ENCODE measurements at regions of chr16 and their contacts with region 1.

Region 1: DNA sequence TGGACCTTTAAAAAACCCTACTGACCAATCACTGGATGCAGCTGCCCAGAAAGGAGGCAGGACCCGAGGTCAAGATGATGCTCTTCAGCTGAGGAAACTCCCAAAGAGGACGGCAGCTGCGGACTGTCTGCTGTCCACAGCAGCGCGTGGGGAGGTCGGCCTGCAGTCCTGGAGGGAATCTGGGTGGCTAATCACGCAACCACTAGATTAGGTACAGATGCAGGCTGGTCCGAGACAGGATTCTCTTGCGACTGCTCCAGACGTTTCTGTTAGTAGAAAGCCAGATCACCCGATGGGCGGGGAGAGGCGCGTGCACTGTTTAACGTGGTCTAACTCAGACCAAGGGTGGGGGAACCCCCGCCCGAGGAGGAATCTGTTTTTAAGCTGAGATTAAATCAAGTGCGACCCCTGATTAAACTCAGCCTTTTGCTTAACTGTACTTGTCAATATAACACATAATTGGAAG is 8.8 kb downstream of the CTRB2 start:
- DNase-seq: no peak
- ATAC-seq: no peak
- H3K4me3 Mint-ChIP-seq: no peak overlapping the region
- H3K27ac Mint-ChIP-seq: no peak overlapping the region
- H3K4me1 Mint-ChIP-seq: peaks cover 12% of the 10 kb centered on the region
- H3K27me3 Mint-ChIP-seq: peaks cover 24% of the 10 kb centered on the region

Region 2: DNA sequence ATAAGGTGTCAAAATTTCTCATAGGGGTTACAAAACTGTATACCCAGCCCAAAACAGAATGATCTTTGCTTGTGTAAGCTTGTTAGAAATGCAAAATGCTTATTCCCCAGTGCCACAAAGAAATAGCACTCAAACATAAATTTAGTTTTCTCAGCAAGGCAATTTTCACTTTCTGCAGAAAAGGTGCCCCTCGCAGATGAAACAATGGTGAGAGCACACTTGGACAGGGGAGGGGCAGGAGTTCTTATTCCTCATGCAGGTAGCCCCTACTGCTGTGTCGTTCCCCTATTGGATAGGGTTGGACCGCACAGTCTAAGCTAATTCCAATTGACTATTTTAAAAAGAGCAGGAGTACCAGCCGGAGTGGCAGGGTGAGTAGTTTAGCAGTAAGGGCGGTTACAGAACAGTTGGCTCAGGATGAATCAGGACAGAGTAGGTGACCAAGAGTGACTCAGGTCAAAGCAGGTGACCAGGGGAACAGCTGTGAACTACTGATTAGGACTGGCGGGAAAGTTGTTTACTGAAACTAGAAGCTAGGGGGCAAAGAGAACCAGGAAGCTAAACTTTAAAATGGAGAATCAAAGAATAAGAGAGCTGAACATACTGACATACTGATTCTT is 76.1 kb before region 1 on chr16:
- CTCF ChIA-PET with region 1: no interaction called
- DNase-seq: no peak
- ATAC-seq: no peak
- H3K4me3 Mint-ChIP-seq: no peak overlapping the region
- H3K27ac Mint-ChIP-seq: no peak overlapping the region
- H3K4me1 Mint-ChIP-seq: no peaks in the 10 kb centered on the region
- H3K27me3 Mint-ChIP-seq: peaks cover 2% of the 10 kb centered on the region

Region 3: GRCh38 chr16:75181630-75182029 is 16.5 kb before region 1 on chr16:
- CTCF ChIA-PET with region 1: interaction called, 13 read pairs
- DNase-seq: no peak
- ATAC-seq: no peak
- H3K4me3 Mint-ChIP-seq: no peak overlapping the region
- H3K27ac Mint-ChIP-seq: no peak overlapping the region
- H3K4me1 Mint-ChIP-seq: peaks cover 3% of the 10 kb centered on the region
- H3K27me3 Mint-ChIP-seq: peaks cover 12% of the 10 kb centered on the region

Region 4: DNA sequence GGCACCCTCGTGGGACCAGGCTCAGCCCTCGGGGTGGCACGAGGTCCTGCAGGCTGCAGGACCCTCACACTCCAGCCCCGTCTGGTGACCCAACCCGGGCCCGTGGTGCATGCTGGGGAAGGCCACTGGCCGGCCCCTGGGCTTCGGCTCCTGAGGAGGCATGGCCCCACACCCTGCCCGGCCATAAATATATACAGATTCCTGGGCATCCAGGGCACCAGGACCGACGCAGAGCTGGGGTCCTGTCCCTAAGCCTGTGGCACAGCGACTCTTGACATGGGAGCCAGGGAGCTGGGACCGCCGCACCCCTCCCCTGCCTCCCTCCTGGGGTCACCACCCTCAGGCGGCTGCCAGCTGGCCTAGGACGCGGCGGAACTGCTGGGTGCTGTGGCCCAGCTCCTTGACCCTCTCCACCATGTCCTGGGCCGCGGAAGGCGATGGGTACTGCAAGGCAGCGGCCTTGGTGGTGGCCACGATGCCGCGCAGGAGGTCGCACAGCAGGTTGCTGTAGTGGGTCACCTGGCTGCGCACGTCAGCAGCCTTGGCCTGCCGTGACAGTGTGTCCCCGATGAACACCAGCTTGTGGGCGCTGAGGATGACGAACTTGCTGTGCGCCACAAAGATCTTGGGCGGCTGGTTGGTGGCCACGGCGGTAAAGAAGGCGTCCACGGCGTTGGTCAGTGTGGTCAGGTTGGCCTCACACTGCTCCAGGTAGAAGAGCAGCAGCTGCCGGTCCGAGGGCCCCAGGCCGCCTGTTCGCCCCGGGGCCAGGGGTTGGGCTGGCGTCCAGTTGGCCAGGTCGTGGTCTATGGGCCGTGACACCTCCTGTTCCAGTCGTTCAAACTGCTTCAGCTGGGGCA is 31.2 kb after region 1 on chr16:
- CTCF ChIA-PET with region 1: interaction called, 39 read pairs
- DNase-seq: no peak
- ATAC-seq: no peak
- H3K4me3 Mint-ChIP-seq: no peak overlapping the region
- H3K27ac Mint-ChIP-seq: no peak overlapping the region
- H3K4me1 Mint-ChIP-seq: peaks cover 2% of the 10 kb centered on the region
- H3K27me3 Mint-ChIP-seq: peaks cover 5% of the 10 kb centered on the region

Region 5: GRCh38 chr16:75379911-75380847 is 182.0 kb after region 1 on chr16:
- CTCF ChIA-PET with region 1: interaction called, 23 read pairs
- DNase-seq: peak; percentile 67
- ATAC-seq: peak; percentile 60
- H3K4me3 Mint-ChIP-seq: peak overlapping the region; percentile 8
- H3K27ac Mint-ChIP-seq: peak overlapping the region; percentile 7
- H3K4me1 Mint-ChIP-seq: peaks cover 24% of the 10 kb centered on the region
- H3K27me3 Mint-ChIP-seq: peaks cover 43% of the 10 kb centered on the region

Region 6: GRCh38 chr16:75402821-75403475 is 204.8 kb after region 1 on chr16:
- CTCF ChIA-PET with region 1: interaction called, 30 read pairs
- DNase-seq: no peak
- ATAC-seq: peak; percentile 64
- H3K4me3 Mint-ChIP-seq: no peak overlapping the region
- H3K27ac Mint-ChIP-seq: no peak overlapping the region
- H3K4me1 Mint-ChIP-seq: peaks cover 3% of the 10 kb centered on the region
- H3K27me3 Mint-ChIP-seq: no peaks in the 10 kb centered on the region

Region 7: GRCh38 chr16:75764154-75764768 is 566.1 kb after region 1 on chr16:
- CTCF ChIA-PET with region 1: interaction called, 11 read pairs
- DNase-seq: peak; percentile 73
- ATAC-seq: peak; percentile 96
- H3K4me3 Mint-ChIP-seq: no peak overlapping the region
- H3K27ac Mint-ChIP-seq: no peak overlapping the region
- H3K4me1 Mint-ChIP-seq: peaks cover 4% of the 10 kb centered on the region
- H3K27me3 Mint-ChIP-seq: peaks cover 2% of the 10 kb centered on the region